Aorta (tissue), 5 donors: ENCODE measurements at regions of chr14 and their contacts with region 1.

Region 1: GRCh38 chr14:36941783-36942521 is 230.5 kb downstream of the SLC25A21 start:
- DNase-seq: peak; percentile 64 to 88
- ATAC-seq: peak; percentile 81
- H3K4me3 ChIP-seq: no peak overlapping the region
- H3K27ac ChIP-seq: no peak overlapping the region
- H3K4me1 ChIP-seq: no peaks in the 10 kb centered on the region
- H3K27me3 ChIP-seq: peaks cover 0 to 3% of the 10 kb centered on the region in 2 donors

Region 2: DNA sequence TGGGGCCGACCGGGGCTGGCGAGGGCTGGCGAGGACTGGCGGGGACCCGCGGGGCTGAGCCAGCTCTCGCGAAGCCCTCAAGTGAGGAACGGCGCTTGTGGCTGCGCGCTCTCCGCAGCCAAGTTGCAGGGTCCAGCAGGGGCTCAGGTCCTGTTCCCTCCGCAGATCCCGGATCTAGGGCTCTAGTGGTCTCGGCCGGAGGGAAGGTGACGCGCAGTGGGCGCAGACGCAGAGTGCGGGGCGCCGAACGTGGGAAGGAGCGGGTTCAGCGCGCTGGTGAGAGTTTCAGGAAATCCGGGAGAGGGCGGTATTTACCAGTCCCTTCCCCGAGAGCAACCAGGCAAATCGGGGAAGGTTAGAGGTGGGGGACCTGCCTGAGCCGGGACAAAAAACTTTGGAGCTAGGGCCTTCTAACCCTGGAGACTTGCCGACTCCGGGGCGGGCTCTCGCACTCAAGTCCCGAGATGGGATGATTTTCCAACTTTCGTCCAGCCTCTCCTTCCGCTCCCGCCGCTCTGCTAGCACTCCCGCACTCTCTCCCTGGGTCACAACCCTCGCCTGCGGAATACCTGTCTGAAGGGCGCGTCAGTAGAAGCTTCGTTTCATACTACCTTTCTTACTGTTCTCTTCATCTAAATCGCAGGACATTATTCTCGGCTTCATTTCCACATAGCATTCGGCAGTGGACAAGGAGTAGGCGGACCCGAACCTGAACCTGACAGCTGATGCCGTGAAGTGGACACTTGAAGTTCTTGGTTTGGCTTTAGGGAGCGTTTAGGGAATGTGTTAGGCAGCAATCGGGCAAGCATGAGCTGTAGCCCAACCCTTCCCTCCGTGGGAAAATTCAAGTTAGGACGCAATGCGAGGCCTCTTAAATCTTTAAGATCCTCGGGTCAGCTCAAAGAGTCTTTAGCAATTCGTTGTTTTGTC is 293.9 kb before region 1 on chr14:
- intact Hi-C with region 1: loop called (anchors 5 to 10 kb)
- DNase-seq: peak in 1 of 2 donors; percentile 78
- ATAC-seq: peak; percentile 84
- H3K4me3 ChIP-seq: peak overlapping the region in 1 of 2 donors; percentile 9
- H3K27ac ChIP-seq: no peak overlapping the region
- H3K4me1 ChIP-seq: no peaks in the 10 kb centered on the region
- H3K27me3 ChIP-seq: peaks cover 0 to 3% of the 10 kb centered on the region in 2 donors

Region 3: DNA sequence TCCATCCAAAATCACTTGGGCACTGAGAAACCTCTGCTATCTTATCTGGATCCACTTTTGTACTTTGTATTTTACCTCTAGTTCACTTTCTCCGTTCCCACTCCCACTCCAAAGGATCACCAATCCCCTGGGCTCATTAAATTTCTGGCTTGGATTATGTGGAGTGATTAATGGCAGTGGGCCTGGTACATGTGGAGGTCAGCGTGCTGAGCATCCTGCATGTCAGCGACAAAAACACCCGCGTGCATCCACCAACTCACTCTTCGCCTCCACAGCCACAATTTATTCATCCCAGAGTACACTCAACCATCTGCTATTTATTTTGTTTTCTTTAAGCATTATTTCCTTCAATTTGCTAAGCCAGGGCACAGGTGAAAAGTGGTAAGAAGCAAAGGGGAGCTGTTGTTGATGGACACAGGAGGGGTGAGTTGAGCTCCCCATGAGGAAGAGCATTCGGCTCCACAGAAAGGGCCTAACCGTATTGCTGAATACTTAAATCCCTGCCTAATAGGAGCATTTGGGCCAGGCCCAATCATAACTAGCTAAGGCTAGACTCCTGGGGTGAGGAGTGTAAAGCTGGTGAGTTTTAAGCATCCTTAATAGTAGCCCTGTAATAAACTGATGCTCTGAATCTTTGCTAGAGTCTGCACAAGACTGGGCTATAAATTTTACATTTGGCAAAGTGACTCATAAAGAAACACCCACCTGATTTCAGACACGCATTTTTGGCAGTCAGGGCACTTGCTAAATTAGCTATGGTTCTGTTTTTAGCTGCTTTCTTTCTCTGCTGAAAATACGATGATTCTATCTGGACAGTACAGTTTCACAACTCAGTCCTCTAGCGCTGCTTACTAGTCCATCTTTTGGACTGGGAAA is 92.7 kb after region 1 on chr14:
- intact Hi-C with region 1: no loop called
- DNase-seq: no peak
- ATAC-seq: peak; percentile 76
- H3K4me3 ChIP-seq: no peak overlapping the region
- H3K27ac ChIP-seq: peak overlapping the region; percentile 61 to 89
- H3K4me1 ChIP-seq: peaks cover 5 to 8% of the 10 kb centered on the region in 2 donors
- H3K27me3 ChIP-seq: no peaks in the 10 kb centered on the region

Region 4: DNA sequence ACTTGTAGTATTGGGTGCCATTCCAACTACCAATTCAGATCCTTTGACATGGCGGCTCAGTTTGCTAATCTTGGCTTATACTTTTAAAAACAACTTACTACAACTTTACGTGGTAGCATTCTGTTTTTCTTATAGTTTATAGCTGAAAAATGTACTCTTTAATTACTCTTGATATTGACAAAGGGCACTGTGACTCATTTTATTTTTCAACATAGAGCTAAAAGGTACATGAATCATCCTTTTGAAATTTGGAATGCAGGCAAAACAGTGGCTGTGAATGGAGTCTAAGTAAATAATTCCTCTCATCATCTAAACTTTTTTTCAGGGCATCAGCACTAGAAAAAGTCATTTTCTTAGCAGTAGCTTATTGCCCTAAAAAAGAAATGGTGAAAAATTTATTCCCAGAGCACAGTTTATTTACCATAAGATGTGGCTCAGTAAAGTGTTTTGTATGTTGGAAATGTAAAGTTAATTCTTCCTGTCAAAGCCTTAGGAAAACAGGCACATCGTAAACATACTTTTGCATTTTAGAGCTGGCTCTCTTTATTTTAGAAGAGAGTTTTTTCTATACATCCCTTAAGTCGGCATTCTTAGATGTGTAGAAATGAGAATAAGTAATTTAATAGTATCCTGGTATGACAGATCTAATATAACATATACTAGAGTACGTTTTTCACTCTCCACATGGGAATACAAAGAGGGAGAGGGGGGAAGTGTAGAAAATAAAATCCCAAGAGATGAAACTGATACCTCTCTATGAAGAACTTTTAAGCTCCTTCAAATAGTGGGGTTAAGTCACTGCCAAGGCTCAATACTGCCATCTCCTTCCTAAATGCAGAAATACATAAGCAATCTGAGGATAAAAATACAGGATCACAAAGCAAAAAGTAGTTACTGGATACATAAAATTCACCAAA is 175.2 kb after region 1 on chr14:
- intact Hi-C with region 1: loop called (anchors 10 kb)
- DNase-seq: no peak
- ATAC-seq: no peak
- H3K4me3 ChIP-seq: peak overlapping the region in 1 of 2 donors; percentile 41
- H3K27ac ChIP-seq: no peak overlapping the region
- H3K4me1 ChIP-seq: no peaks in the 10 kb centered on the region
- H3K27me3 ChIP-seq: no peaks in the 10 kb centered on the region

Region 5: GRCh38 chr14:37142835-37143401 is 201.0 kb after region 1 on chr14:
- intact Hi-C with region 1: loop called in 1 of 2 experiments (anchors 10 kb)
- DNase-seq: no peak
- ATAC-seq: no peak
- H3K4me3 ChIP-seq: no peak overlapping the region
- H3K27ac ChIP-seq: no peak overlapping the region
- H3K4me1 ChIP-seq: peaks cover 0 to 2% of the 10 kb centered on the region in 2 donors
- H3K27me3 ChIP-seq: no peaks in the 10 kb centered on the region